ENCODE measurements at regions of chr1 and their contacts with region 1.

Region 1: GRCh38 chr1:246012341-246012740 is 494.7 kb downstream of the SMYD3 start:
- DNase-seq: peak; percentile 31
- ATAC-seq: peak; percentile 74
- H3K4me3 ChIP-seq: no peak overlapping the region
- H3K27ac ChIP-seq: no peak overlapping the region
- H3K4me1 ChIP-seq: no peaks in the 10 kb centered on the region
- H3K27me3 ChIP-seq: no peaks in the 10 kb centered on the region
- CTCF ChIP-seq: peak; percentile 59 to 80 (median 69)
- POLR2A ChIP-seq: no peak
- RAD21 ChIP-seq: peak; percentile 80

Region 2: GRCh38 chr1:246203180-246203579 is 190.8 kb after region 1 on chr1:
- CTCF ChIA-PET with region 1: no interaction called
- POLR2A ChIA-PET with region 1: no interaction called
- RAD21 ChIA-PET with region 1: no interaction called
- intact Hi-C with region 1: loop called (anchors 2 kb)
- DNase-seq: no peak
- ATAC-seq: peak; percentile 66
- H3K4me3 ChIP-seq: no peak overlapping the region
- H3K27ac ChIP-seq: no peak overlapping the region
- H3K4me1 ChIP-seq: no peaks in the 10 kb centered on the region
- H3K27me3 ChIP-seq: no peaks in the 10 kb centered on the region
- CTCF ChIP-seq: peak; percentile 9 to 51 (median 23); a peak in 3 of 6 replicates
- POLR2A ChIP-seq: no peak
- RAD21 ChIP-seq: peak; percentile 31; the same call in 1 of the 2 replicates

Region 3: DNA sequence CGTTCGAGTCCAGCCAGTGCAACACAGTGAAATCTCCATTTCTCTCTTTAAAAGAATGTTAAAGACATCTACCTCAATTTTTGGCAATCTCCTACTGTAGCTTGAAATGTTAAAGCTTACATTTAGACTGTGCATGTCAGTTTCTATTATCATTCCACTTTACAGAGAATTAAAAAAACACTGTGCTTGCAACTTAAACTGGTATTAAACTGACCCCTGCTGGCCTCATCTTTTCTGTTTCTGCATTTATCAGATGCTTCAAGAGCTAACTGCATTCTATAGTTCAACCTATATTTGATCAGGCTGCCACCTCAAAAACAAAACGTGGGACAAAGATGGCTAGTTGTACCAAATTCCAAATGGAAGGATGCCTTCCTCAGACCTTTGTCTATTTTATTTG is 268.2 kb after region 1 on chr1:
- CTCF ChIA-PET with region 1: interaction called, 6 read pairs
- POLR2A ChIA-PET with region 1: no interaction called
- RAD21 ChIA-PET with region 1: no interaction called
- intact Hi-C with region 1: loop called (anchors 1 kb)
- DNase-seq: peak; percentile 10
- ATAC-seq: peak; percentile 50; the same call in 1 of the 2 replicates
- H3K4me3 ChIP-seq: no peak overlapping the region
- H3K27ac ChIP-seq: no peak overlapping the region
- H3K4me1 ChIP-seq: no peaks in the 10 kb centered on the region
- H3K27me3 ChIP-seq: no peaks in the 10 kb centered on the region
- CTCF ChIP-seq: peak; percentile 22 to 44 (median 43); a peak in 3 of 6 replicates
- POLR2A ChIP-seq: no peak
- RAD21 ChIP-seq: peak; percentile 70

Region 4: GRCh38 chr1:246450611-246451251 is 438.4 kb after region 1 on chr1:
- CTCF ChIA-PET with region 1: no interaction called
- POLR2A ChIA-PET with region 1: no interaction called
- RAD21 ChIA-PET with region 1: no interaction called
- intact Hi-C with region 1: loop called (anchors 1 kb)
- DNase-seq: peak; percentile 12
- ATAC-seq: peak; percentile 76
- H3K4me3 ChIP-seq: no peak overlapping the region
- H3K27ac ChIP-seq: no peak overlapping the region
- H3K4me1 ChIP-seq: no peaks in the 10 kb centered on the region
- H3K27me3 ChIP-seq: no peaks in the 10 kb centered on the region
- CTCF ChIP-seq: peak; percentile 48 to 65 (median 61); a peak in 4 of 6 replicates
- POLR2A ChIP-seq: no peak
- RAD21 ChIP-seq: peak; percentile 86

Region 5: GRCh38 chr1:246497331-246497915 is 485.1 kb after region 1 on chr1:
- CTCF ChIA-PET with region 1: no interaction called
- POLR2A ChIA-PET with region 1: no interaction called
- RAD21 ChIA-PET with region 1: no interaction called
- intact Hi-C with region 1: loop called (anchors 5 kb)
- DNase-seq: peak; percentile 60
- ATAC-seq: peak; percentile 65
- H3K4me3 ChIP-seq: no peak overlapping the region
- H3K27ac ChIP-seq: no peak overlapping the region
- H3K4me1 ChIP-seq: peaks cover 0 to 3% of the 10 kb centered on the region in 2 experiments; a peak in 2 of 4 replicates
- H3K27me3 ChIP-seq: no peaks in the 10 kb centered on the region
- CTCF ChIP-seq: peak; percentile 57 to 77 (median 77); a peak in 5 of 6 replicates
- POLR2A ChIP-seq: no peak
- RAD21 ChIP-seq: peak; percentile 77

Region 6: DNA sequence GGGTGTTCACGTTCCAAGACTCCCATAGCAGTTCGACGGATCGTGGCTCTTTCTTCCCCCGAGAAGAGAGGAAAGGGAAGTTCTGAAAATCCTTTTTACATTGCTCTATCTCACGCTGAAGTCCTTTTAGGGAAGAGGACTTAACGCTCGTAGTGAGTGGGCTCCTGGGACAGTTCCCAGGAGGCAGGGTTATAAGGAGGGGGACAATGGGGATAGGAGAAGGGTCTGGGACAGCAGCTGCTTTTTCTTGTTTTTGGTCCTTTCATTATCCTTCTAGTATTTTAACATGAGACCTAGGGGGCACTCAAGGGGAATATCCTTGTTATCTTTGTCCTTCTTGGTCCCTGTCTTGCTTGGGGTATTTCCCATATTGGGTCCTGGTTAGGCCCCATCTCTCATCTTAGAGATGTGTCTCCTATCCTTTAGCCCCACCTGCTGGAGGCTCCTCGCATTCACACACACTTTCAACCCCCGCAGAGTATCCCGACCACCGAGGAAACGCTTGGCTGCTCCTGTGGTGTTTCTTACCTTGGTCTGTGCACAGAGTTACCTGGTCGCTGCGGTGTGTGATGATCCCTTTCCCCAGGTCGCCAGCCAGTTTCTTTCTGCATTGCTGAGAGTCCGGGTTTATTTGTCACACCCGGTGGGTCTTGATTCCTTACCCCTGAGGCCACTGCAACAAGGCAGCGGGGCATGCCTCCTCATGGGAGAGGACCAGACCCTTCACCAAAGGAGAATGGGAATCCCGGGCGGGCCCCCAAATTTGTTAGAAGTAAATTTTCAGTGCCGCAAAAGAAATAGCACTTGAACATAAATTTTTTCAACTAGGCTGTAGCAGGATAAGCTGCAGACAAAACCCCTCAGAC is 741.6 kb after region 1 on chr1:
- CTCF ChIA-PET with region 1: no interaction called
- POLR2A ChIA-PET with region 1: no interaction called
- RAD21 ChIA-PET with region 1: no interaction called
- intact Hi-C with region 1: loop called (anchors 5 kb)
- DNase-seq: peak; percentile 52
- ATAC-seq: peak; percentile 98
- H3K4me3 ChIP-seq: peak overlapping the region; percentile 9 to 33; a peak in 2 of 4 replicates
- H3K27ac ChIP-seq: no peak overlapping the region
- H3K4me1 ChIP-seq: 0 out of 4 replicates have a peak, but pooled peaks cover 0 to 3% of the 10 kb centered on the region in 2 experiments
- H3K27me3 ChIP-seq: no peaks in the 10 kb centered on the region
- CTCF ChIP-seq: peak; percentile 71 to 82 (median 78)
- POLR2A ChIP-seq: no peak
- RAD21 ChIP-seq: peak; percentile 92

Measured in HCT116 (cell line).